Right ventricle myocardium inferior (tissue), 1 donor: ENCODE measurements at regions of chr4 and their contacts with region 1.

Region 1: GRCh38 chr4:74311696-74312313 is 3.5 kb downstream of the EPGN start:
- DNase-seq: no peak
- ATAC-seq: no peak

Region 2: DNA sequence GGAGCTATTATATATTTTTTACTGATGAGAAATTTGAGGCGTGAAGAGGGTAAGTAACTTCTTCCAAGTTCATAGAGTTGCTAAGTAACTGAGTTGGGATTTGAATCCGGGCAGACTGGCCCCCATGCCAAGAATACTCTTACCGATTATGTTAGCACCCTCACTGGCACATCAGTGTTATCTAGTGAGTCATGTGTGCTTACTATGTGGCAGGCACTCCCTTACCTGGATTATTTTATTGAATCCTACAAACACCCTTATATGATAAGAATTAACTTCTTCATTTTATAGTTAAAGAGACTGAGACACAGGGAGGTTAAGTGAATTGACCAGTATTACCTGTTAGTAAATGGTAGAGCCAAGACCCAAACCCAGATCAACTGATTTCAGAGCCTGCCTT is 133.0 kb before region 1 on chr4:
- intact Hi-C with region 1: no loop called
- DNase-seq: no peak
- ATAC-seq: no peak

Region 3: GRCh38 chr4:74189331-74190043 is 122.3 kb before region 1 on chr4:
- intact Hi-C with region 1: loop called (anchors 5 kb)
- DNase-seq: no peak
- ATAC-seq: no peak

Region 4: DNA sequence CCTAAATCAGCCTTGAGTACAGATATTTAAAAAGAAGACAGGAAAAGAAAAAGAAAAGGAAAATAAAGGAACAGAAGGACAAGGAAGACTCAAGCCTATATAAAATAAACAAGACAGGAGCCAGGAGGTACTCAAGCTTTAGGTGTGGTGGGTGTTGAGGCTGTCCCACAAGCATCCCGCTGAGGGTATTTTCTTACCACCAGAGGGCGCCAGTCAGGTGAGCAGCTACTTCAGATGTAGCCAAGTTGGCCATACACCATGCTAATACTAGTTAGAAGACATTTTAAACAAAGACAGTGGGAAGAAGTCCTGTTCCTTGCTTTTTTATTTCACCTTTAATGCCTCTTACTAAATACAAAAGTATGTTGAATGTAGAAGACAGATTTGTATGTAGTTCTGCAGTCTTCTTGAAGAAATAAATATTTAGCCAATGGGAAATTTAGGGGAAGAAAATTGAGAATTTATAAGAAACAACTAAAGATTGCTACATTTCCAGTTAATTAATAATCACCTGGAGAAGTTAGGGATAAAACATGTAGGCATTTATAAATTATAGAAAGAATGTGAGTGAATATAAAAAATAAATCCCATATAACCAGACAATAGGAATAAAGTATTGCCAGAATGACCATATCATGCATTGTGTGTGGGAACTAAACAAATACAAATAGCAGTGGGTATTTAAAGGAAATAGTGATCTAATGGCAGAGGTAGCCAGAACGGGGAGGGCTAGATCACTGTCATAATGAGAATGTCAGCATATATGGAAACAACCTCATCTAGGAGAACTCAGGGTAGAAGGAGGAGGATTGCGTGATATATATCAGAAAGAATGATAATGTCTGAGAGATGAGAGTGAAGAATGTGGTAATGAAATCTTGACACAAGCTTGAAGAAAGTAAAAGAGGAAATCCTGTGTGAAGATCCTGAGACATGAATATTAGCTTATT is 82.8 kb before region 1 on chr4:
- intact Hi-C with region 1: loop called (anchors 5 kb)
- DNase-seq: no peak
- ATAC-seq: no peak

Region 5: GRCh38 chr4:74444891-74445642 is 133.3 kb after region 1 on chr4 and contains the start of gene AREG:
- intact Hi-C with region 1: no loop called
- DNase-seq: peak; percentile 92
- ATAC-seq: peak; percentile 87
- total RNA-seq, gene AREG: 1.4 TPM